ENCODE measurements at regions of chr2 and their contacts with region 1.

Region 1: GRCh38 chr2:23649819-23650218 is 264.8 kb downstream of the KLHL29 start:
- DNase-seq: no peak
- H3K4me3 ChIP-seq: no peak overlapping the region
- H3K27ac ChIP-seq: no peak overlapping the region
- H3K4me1 ChIP-seq: peaks cover 7% of the 10 kb centered on the region
- H3K27me3 ChIP-seq: no peaks in the 10 kb centered on the region
- CTCF ChIP-seq: no peak

Region 2: GRCh38 chr2:23009545-23010149 is 640.2 kb before region 1 on chr2:
- CTCF ChIA-PET with region 1: no interaction called
- POLR2A ChIA-PET with region 1: no interaction called
- intact Hi-C with region 1: loop called (anchors 10 kb)
- DNase-seq: no peak
- H3K4me3 ChIP-seq: no peak overlapping the region
- H3K27ac ChIP-seq: no peak overlapping the region
- H3K4me1 ChIP-seq: no peaks in the 10 kb centered on the region
- H3K27me3 ChIP-seq: peaks cover 11% of the 10 kb centered on the region; the same call in 1 of the 2 replicates
- CTCF ChIP-seq: no peak

Region 3: GRCh38 chr2:23662941-23663920 is 13.4 kb after region 1 on chr2:
- CTCF ChIA-PET with region 1: no interaction called
- POLR2A ChIA-PET with region 1: no interaction called
- intact Hi-C with region 1: no loop called
- DNase-seq: no peak
- H3K4me3 ChIP-seq: no peak overlapping the region
- H3K27ac ChIP-seq: no peak overlapping the region
- H3K4me1 ChIP-seq: no peaks in the 10 kb centered on the region
- H3K27me3 ChIP-seq: no peaks in the 10 kb centered on the region
- CTCF ChIP-seq: no peak

Region 4: DNA sequence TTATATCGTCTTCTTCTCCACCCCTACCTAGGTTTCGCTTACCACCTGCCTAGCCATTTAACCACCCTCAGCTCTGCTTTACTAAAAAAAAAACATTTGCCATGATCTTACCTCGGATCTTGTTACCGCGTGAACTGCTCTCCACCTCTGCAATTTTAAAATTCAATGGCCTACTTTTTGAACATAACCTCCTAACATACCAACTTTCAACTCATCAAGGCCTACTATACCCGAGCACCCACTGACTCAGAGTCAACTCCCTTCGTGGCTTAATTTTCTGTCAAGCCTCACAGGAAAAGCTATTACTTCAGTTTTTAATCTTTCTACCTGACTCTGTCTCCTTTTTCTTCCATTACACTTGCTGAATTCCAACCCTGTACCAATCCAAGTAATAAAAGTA is 221.4 kb after region 1 on chr2:
- CTCF ChIA-PET with region 1: no interaction called
- POLR2A ChIA-PET with region 1: no interaction called
- intact Hi-C with region 1: no loop called
- DNase-seq: no peak
- H3K4me3 ChIP-seq: no peak overlapping the region
- H3K27ac ChIP-seq: no peak overlapping the region
- H3K4me1 ChIP-seq: no peaks in the 10 kb centered on the region
- H3K27me3 ChIP-seq: no peaks in the 10 kb centered on the region
- CTCF ChIP-seq: no peak

Region 5: GRCh38 chr2:23988371-23988770 is 338.6 kb after region 1 on chr2:
- CTCF ChIA-PET with region 1: no interaction called
- POLR2A ChIA-PET with region 1: no interaction called
- intact Hi-C with region 1: no loop called
- DNase-seq: no peak
- H3K4me3 ChIP-seq: no peak overlapping the region
- H3K27ac ChIP-seq: no peak overlapping the region
- H3K4me1 ChIP-seq: no peaks in the 10 kb centered on the region
- H3K27me3 ChIP-seq: no peaks in the 10 kb centered on the region
- CTCF ChIP-seq: peak; percentile 73